GM12878 (cell line): ENCODE measurements at regions of chr1 and their contacts with region 1.

Region 1: DNA sequence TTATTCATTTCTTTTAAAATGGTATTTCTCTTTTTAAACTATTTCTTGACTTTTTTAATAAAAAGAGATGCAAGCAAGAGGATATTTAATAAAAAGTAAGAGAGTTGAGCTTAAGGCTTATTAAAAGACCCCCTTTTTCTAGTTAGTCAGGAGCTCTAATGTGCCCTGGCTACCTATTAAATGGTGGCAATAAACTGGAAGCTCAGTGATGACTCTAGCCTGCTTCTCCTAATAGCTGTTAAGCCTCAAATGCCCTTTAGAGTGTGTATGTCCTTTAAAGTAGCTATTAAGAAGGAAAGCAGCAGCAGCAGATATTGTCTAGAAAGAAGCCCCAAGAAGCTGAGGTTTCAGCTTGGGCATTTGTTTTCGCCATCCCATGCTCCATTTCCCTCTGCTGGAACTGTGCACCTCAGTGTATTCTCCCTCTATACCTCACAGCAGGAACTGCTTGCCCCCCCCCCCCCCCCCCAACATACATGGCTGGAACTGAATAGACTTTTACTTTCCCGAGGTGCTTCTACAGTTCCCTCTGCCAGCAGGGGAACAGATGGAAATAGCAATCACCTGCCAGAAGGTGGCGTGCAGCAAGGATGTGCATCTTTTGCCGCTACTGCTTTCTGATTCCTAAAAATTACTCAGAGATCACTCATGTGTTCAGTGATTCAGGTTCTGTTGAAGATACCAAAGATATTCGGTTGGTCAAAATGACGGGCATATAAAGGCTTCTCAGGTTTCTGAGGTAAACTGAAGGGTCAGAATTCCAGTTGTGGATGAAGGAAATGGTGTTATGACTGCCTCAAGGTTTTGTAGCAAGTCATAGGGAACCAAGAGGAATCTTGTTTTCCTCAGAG is 2.5 kb downstream of the RGS4 start:
- DNase-seq: no peak
- ATAC-seq: peak; percentile 85
- H3K4me3 ChIP-seq: no peak overlapping the region
- H3K27ac ChIP-seq: no peak overlapping the region
- H3K4me1 ChIP-seq: no peaks in the 10 kb centered on the region
- H3K27me3 ChIP-seq: peaks cover 0 to 8% of the 10 kb centered on the region in 2 experiments; a peak in 1 of 4 replicates
- CTCF ChIP-seq: peak; percentile 66 to 77 (median 74)
- EP300 ChIP-seq: no peak
- POLR2A ChIP-seq: no peak
- RAD21 ChIP-seq: peak; percentile 42

Region 2: DNA sequence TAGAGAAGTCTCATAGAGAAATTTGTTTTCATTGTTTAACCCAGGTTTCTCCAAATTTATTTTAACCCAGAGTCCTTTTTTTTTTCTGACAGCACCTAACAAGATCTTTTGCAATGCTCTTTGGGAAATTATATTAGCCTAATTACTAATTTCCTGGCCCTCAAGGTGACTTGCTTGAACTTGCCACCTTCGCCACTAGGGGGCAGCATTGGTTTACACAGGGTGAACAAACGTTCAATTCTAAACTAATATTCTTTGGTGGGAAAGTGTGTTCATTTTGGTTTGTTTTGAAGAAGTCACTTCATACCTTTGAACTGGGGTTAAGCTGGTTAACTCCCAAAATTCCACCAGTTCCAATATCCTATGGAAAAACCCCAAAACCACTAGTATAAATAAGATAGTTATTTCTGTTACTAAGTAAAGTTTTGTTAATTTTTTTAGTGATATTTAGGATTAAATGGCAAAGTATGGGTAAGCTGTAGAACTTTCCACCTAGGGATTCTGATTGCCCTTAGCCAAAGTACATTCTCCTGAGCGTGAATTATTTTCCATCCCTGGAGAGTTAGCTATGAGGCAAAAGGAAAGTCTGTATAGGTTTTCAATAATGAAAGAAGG is 223.7 kb before region 1 on chr1:
- CTCF ChIA-PET with region 1: interaction called, 9 read pairs
- POLR2A ChIA-PET with region 1: no interaction called
- RAD21 ChIA-PET with region 1: interaction called, 3 read pairs
- SMC1A ChIA-PET with region 1: no interaction called
- in situ Hi-C with region 1: no loop called
- intact Hi-C with region 1: loop called (anchors 5 kb)
- DNase-seq: no peak
- ATAC-seq: peak; percentile 79
- H3K4me3 ChIP-seq: no peak overlapping the region
- H3K27ac ChIP-seq: no peak overlapping the region
- H3K4me1 ChIP-seq: no peaks in the 10 kb centered on the region
- H3K27me3 ChIP-seq: no peaks in the 10 kb centered on the region; a peak in 1 of 4 replicates
- CTCF ChIP-seq: peak; percentile 81 to 83 (median 82)
- EP300 ChIP-seq: no peak
- POLR2A ChIP-seq: no peak
- RAD21 ChIP-seq: peak; percentile 83

Region 3: DNA sequence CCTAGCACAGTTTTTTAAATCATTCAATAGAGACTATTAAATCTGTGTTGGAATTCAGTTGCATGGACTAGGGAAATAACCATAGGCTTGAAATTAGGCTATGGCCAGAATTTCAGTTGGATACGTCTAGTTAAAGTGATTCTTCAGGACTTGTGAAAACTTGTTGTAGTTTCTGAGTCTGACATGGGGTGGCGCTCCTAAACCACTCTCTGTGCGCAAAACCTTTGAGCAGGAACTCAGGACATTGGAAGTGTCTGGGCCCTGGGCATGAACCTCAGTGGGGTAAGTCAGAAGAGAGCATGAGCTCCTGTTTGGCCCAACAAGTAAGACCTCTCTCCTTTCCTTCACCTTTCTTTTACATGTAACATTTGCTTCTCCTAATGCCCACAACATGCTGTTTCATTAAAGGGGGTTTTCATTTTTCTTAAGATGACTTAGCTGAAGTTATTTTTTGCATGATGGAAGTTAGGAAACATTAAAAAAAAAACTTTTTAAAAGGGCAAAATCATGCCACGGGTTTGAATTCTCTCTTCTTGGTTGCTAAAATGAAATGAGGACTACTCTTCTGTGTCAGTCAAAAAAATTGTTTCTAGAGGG is 193.5 kb before region 1 on chr1:
- CTCF ChIA-PET with region 1: interaction called, 4 read pairs
- POLR2A ChIA-PET with region 1: no interaction called
- RAD21 ChIA-PET with region 1: no interaction called
- SMC1A ChIA-PET with region 1: no interaction called
- in situ Hi-C with region 1: no loop called
- intact Hi-C with region 1: loop called (anchors 10 kb)
- DNase-seq: no peak
- ATAC-seq: peak; percentile 60
- H3K4me3 ChIP-seq: no peak overlapping the region
- H3K27ac ChIP-seq: no peak overlapping the region
- H3K4me1 ChIP-seq: no peaks in the 10 kb centered on the region
- H3K27me3 ChIP-seq: peaks cover 0 to 2% of the 10 kb centered on the region in 2 experiments; a peak in 2 of 4 replicates
- CTCF ChIP-seq: peak; percentile 54 to 59 (median 58); a peak in 5 of 6 replicates
- EP300 ChIP-seq: no peak
- POLR2A ChIP-seq: no peak
- RAD21 ChIP-seq: peak; percentile 70

Region 4: DNA sequence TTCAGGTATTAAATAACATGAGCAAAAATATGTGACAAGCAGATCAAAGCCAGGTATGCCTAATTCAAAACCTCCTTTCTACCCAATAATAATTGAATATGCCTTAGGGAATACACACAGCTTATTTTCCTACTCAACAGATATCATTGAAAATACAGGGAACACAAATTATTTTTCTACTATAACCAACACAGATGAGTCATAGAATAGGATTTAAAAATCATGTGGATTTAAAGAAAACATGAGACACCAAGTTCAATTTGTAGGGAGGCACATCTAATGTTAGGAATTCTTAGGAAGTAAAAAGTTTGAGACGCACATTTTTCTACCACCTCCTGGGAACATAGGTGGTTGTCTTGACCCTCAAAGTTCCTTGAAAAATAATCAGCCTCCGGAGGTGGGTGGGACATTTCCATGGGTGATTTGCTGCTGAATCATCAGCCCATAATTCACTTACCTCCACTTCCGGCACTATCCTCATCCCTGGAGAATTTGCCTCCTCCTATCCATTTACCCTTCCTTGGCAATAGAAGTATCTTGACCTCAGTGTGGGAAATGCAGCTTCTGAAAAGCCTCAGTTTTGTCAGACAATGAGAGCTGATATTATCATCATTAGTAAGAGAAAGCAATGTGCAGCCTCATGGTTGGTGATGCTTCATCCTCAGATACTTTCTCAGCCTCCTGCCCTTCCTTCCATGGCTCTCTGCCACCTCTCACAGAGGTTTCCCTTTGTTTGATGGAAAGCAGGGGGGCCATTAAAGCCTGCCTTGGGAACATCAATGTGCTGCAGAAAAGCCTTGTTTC is 36.0 kb before region 1 on chr1:
- CTCF ChIA-PET with region 1: no interaction called
- POLR2A ChIA-PET with region 1: no interaction called
- RAD21 ChIA-PET with region 1: no interaction called
- SMC1A ChIA-PET with region 1: no interaction called
- in situ Hi-C with region 1: no loop called
- intact Hi-C with region 1: no loop called
- DNase-seq: no peak
- ATAC-seq: no peak
- H3K4me3 ChIP-seq: no peak overlapping the region
- H3K27ac ChIP-seq: no peak overlapping the region
- H3K4me1 ChIP-seq: no peaks in the 10 kb centered on the region
- H3K27me3 ChIP-seq: no peaks in the 10 kb centered on the region
- CTCF ChIP-seq: no peak
- EP300 ChIP-seq: no peak
- POLR2A ChIP-seq: no peak
- RAD21 ChIP-seq: no peak

Region 5: GRCh38 chr1:163060343-163061007 is 11.2 kb before region 1 on chr1:
- CTCF ChIA-PET with region 1: interaction called, 11 read pairs
- POLR2A ChIA-PET with region 1: no interaction called
- RAD21 ChIA-PET with region 1: no interaction called
- SMC1A ChIA-PET with region 1: no interaction called
- in situ Hi-C with region 1: no loop called
- intact Hi-C with region 1: no loop called
- DNase-seq: no peak
- ATAC-seq: no peak
- H3K4me3 ChIP-seq: no peak overlapping the region
- H3K27ac ChIP-seq: no peak overlapping the region
- H3K4me1 ChIP-seq: no peaks in the 10 kb centered on the region
- H3K27me3 ChIP-seq: 0 out of 4 replicates have a peak, but pooled peaks cover 0 to 2% of the 10 kb centered on the region in 2 experiments
- CTCF ChIP-seq: no peak
- EP300 ChIP-seq: no peak
- POLR2A ChIP-seq: no peak
- RAD21 ChIP-seq: no peak

Region 6: DNA sequence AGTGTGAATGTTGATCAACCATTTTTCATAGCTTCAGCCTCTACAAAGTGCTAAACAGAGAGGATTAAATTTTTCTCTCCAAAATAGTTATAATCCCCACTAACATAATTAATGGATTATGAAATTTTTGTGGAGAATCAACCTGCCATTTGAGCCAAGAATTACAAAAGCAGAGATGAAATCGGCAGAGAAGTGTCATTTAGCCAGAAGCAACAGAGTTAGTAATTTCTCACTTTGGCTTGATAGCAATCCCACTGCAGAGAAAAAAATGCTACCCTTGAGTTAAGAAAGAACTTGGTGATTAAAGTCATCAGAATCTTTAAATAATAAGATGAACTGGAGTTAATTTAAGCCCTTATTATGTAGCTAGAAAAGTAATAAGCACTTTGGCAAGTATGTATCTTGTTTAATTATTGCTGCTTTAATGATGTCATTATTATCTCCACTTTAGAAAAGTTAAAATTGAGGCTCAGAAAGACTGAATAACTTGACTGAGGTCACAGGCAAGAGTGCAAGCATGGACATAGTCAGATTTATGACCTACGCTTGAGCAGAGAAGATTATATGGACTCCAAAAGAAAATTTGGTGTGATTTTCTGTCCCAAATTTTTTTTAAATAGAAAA is 34.8 kb after region 1 on chr1:
- CTCF ChIA-PET with region 1: no interaction called
- POLR2A ChIA-PET with region 1: no interaction called
- RAD21 ChIA-PET with region 1: no interaction called
- SMC1A ChIA-PET with region 1: no interaction called
- in situ Hi-C with region 1: no loop called
- intact Hi-C with region 1: no loop called
- DNase-seq: no peak
- ATAC-seq: no peak
- H3K4me3 ChIP-seq: no peak overlapping the region
- H3K27ac ChIP-seq: no peak overlapping the region
- H3K4me1 ChIP-seq: no peaks in the 10 kb centered on the region
- H3K27me3 ChIP-seq: no peaks in the 10 kb centered on the region
- CTCF ChIP-seq: no peak
- EP300 ChIP-seq: no peak
- POLR2A ChIP-seq: no peak
- RAD21 ChIP-seq: no peak